Posterior cingulate gyrus (tissue), 11 donors: ENCODE measurements at regions of chrX and their contacts with region 1.

Region 1: DNA sequence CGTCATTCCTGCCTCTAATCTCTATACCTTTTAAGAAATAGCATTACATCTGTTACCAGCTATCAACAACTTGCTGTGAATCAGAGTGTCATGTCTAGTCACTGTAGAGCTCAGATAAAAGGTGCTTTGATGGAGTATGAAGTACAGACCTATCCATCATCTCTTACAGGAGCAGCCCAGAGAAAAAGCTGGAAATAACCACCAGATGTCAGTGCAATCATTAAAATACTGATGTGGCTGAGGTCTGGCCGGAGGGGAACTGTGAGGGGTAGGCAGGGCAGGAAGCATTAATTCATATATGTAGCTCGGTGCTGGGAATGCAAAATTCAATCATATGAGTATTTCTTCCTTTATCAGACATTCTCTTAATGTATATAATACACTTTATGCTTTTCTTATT is 100.6 kb downstream of the AKAP4 start:
- DNase-seq: no peak

Region 2: GRCh38 chrX:50157545-50158135 is 57.5 kb after region 1 on chrX:
- intact Hi-C with region 1: loop called (anchors 10 kb)
- DNase-seq: no peak

Region 3: GRCh38 chrX:50430917-50431575 is 330.9 kb after region 1 on chrX:
- intact Hi-C with region 1: no loop called
- DNase-seq: no peak

Region 4: DNA sequence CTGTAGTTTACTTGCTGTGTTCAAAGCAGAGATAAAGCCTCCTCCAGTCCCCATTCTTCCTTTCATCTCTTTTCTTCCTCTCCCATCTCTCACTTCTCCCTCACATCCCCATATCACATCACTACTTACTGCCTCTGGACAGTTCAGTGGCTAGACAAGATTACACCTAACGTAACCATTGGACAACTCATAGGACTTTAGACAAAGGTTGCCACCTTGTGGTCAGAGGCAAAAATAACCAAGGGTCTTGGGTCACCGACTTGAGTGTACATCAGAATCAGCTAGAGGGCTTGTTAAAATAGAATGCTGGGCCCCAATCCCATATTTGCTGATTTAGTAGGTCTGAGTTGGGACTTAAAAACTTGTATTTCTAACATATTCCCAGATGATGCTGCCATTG is 479.8 kb after region 1 on chrX:
- intact Hi-C with region 1: loop called (anchors 1 kb)
- DNase-seq: peak in 3 of 10 donors; percentile 4 to 33 (median 10)